Naive thymus-derived CD4-positive, alpha-beta T cell (primary cell): ENCODE measurements at regions of chr1 and their contacts with region 1.

Region 1: DNA sequence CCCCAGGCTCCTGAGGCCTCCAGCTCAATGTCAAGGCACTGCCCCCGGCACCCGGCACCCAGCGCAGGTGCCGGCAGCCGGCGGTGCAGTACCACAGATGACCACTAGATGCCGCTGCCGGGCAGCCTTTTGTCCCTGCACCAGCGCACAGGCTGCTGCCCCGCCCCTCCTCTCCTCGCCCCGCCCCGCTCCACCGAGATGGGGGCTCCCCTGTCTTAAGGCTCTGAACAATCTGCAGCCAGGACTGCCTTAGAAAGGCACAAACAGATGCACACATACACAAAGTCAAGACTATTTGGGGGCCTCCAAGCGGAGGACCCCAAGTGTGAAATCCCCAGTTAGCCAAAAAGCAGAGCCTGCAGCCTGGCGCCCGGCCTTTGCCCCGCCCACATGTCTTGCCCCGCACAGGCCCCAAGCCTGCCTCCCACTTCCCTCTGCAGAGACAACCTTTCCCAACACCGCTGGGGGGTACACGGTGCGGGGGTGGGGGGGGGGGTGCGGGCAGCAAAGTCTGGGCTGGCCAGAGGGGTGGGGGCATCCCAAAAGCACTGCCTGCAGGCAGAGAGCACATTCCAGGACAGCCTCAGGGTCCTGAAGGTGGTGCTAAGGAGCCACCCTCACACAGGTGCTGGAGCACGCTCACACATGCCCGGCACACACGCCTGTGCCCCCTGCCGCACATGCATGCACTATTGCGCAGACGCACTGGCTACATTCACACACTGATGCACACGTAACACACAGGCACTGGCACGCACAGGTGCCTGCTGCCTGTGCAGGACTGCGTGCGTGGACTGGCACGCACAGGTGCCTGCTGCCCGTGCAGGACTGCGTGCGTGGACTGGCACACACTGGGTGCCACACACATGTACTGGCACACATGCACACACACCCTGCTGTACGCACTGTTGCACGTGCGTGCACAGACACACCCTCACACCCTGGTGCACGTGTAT is 37.1 kb downstream of the ARHGEF16 start:
- DNase-seq: peak; percentile 65 to 90 (median 83)
- ATAC-seq: peak; percentile 96
- H3K4me3 ChIP-seq: no peak overlapping the region
- H3K4me3 Mint-ChIP-seq: peak overlapping the region in 7 of 10 donors; percentile 26 to 76 (median 62)
- H3K27ac ChIP-seq: no peak overlapping the region
- H3K27ac Mint-ChIP-seq: peak overlapping the region in 2 of 9 donors; percentile 28 to 38
- H3K4me1 ChIP-seq: no peaks in the 10 kb centered on the region
- H3K4me1 Mint-ChIP-seq: peaks cover 2 to 7% (median 5%) of the 10 kb centered on the region in 7 donors
- H3K27me3 ChIP-seq: no peaks in the 10 kb centered on the region
- H3K27me3 Mint-ChIP-seq: no peaks in the 10 kb centered on the region

Region 2: DNA sequence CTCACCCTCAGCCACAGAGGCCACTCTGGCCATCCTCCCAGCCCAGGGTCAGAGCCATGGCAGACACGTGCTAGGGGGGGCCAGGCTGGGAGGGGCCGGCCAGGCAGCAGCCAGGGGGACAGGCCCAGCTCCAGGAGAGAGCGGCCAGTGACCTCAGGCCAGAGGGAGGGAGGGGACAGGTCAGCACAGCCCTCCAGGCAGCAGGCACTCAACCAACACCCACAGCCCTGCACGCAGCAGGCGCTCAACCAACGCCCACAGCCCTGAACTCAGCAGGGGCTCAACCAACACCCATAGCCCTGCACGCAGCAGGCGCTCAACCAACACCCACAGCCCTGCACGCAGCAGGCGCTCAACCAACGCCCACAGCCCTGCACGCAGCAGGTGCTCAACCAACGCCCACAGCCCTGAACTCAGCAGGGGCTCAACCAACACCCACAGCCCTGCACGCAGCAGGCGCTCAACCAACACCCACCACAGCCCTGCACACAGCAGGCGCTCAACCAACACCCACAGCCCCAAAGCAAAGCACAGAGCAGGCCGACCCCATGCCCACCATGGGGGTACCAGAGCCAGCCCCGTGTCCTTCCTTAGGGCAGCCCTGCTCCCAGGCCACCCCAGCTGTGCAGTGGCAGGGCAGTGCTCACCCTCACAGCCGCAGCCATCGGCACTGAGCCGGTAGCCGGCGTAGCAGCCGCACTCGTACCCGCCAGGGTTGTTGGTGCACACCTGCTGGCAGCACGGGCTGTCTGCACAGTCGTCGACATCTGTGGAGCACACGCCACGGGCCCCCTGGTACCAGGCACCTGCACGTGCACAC is 18.8 kb after region 1 on chr1:
- CTCF ChIA-PET with region 1: no interaction called
- POLR2A ChIA-PET with region 1: no interaction called
- intact Hi-C with region 1: no loop called
- DNase-seq: no peak
- ATAC-seq: no peak
- H3K4me3 ChIP-seq: no peak overlapping the region
- H3K4me3 Mint-ChIP-seq: no peak overlapping the region
- H3K27ac ChIP-seq: no peak overlapping the region
- H3K27ac Mint-ChIP-seq: no peak overlapping the region
- H3K4me1 ChIP-seq: no peaks in the 10 kb centered on the region
- H3K4me1 Mint-ChIP-seq: peaks cover 0 to 4% (median 0%) of the 10 kb centered on the region in 7 donors
- H3K27me3 ChIP-seq: no peaks in the 10 kb centered on the region
- H3K27me3 Mint-ChIP-seq: no peaks in the 10 kb centered on the region

Region 3: DNA sequence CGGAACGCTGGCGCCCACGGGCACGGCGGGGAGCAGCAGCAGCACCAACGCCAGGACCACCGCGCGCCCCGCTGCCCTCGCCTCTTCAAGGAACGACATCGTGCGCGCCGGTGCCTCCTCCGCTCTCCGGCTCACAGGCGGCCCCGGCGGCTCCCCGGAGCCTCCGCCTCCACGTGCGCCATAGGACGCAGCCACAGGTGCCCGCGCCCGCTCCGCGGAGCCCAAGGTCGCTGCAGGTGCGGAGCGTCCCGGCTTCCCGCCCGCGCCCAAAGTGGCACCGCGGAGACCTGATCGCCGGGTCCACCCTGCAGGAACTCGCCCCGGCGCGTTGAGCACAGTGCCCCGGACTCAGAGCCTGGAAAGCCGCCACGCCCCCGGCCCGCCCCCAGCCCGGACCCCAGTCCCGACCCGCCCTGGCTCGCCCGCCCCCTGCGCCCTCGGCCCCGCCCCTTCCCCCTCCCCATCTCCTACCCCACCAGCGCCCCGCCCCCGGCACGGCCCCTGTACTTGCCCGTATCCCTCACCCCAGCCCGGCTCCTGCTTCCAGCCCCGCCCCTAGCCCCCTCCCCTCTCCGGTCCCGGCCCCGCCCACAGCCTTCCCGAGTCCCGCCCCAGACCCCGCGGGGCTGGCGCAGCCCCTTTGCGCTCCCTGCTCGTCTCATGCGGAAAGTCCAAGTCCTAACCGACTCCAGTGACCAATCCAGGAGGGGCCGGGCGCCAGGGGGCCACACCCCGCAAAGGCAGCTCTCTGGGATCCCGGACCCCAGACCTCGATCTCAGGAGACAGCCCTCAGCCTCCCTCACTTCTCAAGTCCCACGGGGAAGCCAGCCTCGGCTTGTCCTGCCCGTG is 119.8 kb after region 1 on chr1 and contains the start of gene MEGF6:
- CTCF ChIA-PET with region 1: interaction called, 5 read pairs
- POLR2A ChIA-PET with region 1: no interaction called
- intact Hi-C with region 1: loop called in 1 of 2 experiments (anchors 1 kb)
- DNase-seq: peak in 4 of 9 donors; percentile 28 to 59 (median 36)
- ATAC-seq: peak; percentile 75
- H3K4me3 ChIP-seq: no peak within 1 kb of the TSS
- H3K4me3 Mint-ChIP-seq: peak within 1 kb of the TSS; percentile 30 to 86 (median 80)
- H3K27ac ChIP-seq: no peak within 1 kb of the TSS
- H3K27ac Mint-ChIP-seq: peak within 1 kb of the TSS in 2 of 9 donors; percentile 20 to 42
- H3K4me1 ChIP-seq: peaks cover 0 to 9% of the 10 kb centered on the region in 2 donors
- H3K4me1 Mint-ChIP-seq: peaks cover 0 to 10% (median 10%) of the 10 kb centered on the region in 7 donors
- H3K27me3 ChIP-seq: no peaks in the 10 kb centered on the region
- H3K27me3 Mint-ChIP-seq: peaks cover 0 to 34% (median 6%) of the 10 kb centered on the region in 5 donors
- total RNA-seq, gene MEGF6: 14.6 to 209 (median 81.3) TPM

Region 4: GRCh38 chr1:3721955-3722465 is 230.4 kb after region 1 on chr1:
- CTCF ChIA-PET with region 1: no interaction called
- POLR2A ChIA-PET with region 1: no interaction called
- intact Hi-C with region 1: loop called in 1 of 2 experiments (anchors 5 kb)
- DNase-seq: no peak
- ATAC-seq: no peak
- H3K4me3 ChIP-seq: no peak overlapping the region
- H3K4me3 Mint-ChIP-seq: peak overlapping the region in 1 of 10 donors; percentile 39
- H3K27ac ChIP-seq: no peak overlapping the region
- H3K27ac Mint-ChIP-seq: peak overlapping the region in 1 of 9 donors; percentile 90
- H3K4me1 ChIP-seq: peaks cover 0 to 7% of the 10 kb centered on the region in 2 donors
- H3K4me1 Mint-ChIP-seq: peaks cover 0 to 12% (median 2%) of the 10 kb centered on the region in 7 donors
- H3K27me3 ChIP-seq: no peaks in the 10 kb centered on the region
- H3K27me3 Mint-ChIP-seq: no peaks in the 10 kb centered on the region